CD8-positive, alpha-beta T cell (primary cell): ENCODE measurements at regions of chr9 and their contacts with region 1.

Region 1: DNA sequence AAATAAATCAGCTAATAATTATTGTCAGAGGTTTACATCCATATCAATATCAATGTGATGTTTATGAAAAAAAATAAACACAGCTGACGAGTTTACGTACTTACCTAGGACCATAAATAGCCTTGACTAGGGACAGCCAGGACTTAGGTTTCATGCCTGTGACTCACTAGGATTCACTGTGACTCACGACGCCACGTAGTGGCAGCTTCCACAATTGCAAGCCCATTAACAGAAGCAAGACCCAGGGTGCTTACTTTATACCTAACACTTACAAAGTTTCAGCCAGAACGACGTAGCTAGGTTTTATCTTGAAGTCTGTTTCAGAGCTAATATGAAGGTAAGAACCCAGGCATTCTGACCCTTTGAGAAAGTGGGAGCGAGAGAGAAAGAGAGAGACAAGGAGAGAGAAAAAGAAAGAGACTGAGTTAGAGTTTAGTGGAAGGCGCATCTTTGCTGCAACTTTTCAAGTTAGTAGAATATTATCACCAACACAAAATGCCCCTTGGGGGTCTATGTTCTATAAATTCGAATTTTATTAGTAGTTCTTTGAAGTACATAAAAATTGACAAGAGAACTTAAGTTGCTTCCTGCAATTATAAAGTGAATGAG is 191.2 kb downstream of the GNA14 start:
- DNase-seq: peak; percentile 63 to 81 (median 74)
- ATAC-seq: peak; percentile 85
- H3K4me3 ChIP-seq: no peak overlapping the region
- H3K4me3 Mint-ChIP-seq: no peak overlapping the region
- H3K27ac ChIP-seq: no peak overlapping the region
- H3K27ac Mint-ChIP-seq: no peak overlapping the region
- H3K4me1 ChIP-seq: no peaks in the 10 kb centered on the region
- H3K4me1 Mint-ChIP-seq: peaks cover 15% of the 10 kb centered on the region
- H3K27me3 ChIP-seq: no peaks in the 10 kb centered on the region
- H3K27me3 Mint-ChIP-seq: no peaks in the 10 kb centered on the region
- CTCF ChIP-seq: peak; percentile 74

Region 2: DNA sequence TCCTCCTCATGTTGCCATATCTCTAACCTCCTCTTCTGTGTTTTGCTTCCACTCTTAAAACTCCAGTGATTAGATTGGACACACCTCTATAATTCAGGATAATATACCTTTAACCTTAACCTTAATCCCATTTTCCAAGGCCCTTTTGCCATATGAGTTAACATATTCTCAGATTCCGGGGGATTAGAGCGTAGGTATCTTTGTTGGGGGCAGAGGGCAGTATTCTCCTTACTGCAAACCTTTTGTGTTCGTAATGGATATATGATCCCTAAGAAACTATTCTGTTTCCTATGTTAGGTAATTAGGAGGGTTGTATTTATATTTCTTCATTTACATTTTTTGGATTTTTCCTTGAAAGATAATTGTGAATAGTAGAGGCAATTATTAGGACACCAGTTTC is 180.1 kb before region 1 on chr9:
- CTCF ChIA-PET with region 1: no interaction called
- POLR2A ChIA-PET with region 1: no interaction called
- intact Hi-C with region 1: no loop called
- DNase-seq: no peak
- ATAC-seq: no peak
- H3K4me3 ChIP-seq: no peak overlapping the region
- H3K4me3 Mint-ChIP-seq: no peak overlapping the region
- H3K27ac ChIP-seq: no peak overlapping the region
- H3K27ac Mint-ChIP-seq: no peak overlapping the region
- H3K4me1 ChIP-seq: no peaks in the 10 kb centered on the region
- H3K4me1 Mint-ChIP-seq: no peaks in the 10 kb centered on the region
- H3K27me3 ChIP-seq: no peaks in the 10 kb centered on the region
- H3K27me3 Mint-ChIP-seq: no peaks in the 10 kb centered on the region
- CTCF ChIP-seq: no peak

Region 3: GRCh38 chr9:77433675-77434445 is 23.1 kb before region 1 on chr9:
- CTCF ChIA-PET with region 1: interaction called, 98 read pairs
- POLR2A ChIA-PET with region 1: no interaction called
- intact Hi-C with region 1: no loop called
- DNase-seq: peak in 7 of 9 experiments; percentile 9 to 59 (median 46)
- ATAC-seq: peak; percentile 70
- H3K4me3 ChIP-seq: no peak overlapping the region
- H3K4me3 Mint-ChIP-seq: no peak overlapping the region
- H3K27ac ChIP-seq: no peak overlapping the region
- H3K27ac Mint-ChIP-seq: no peak overlapping the region
- H3K4me1 ChIP-seq: no peaks in the 10 kb centered on the region
- H3K4me1 Mint-ChIP-seq: peaks cover 2% of the 10 kb centered on the region
- H3K27me3 ChIP-seq: no peaks in the 10 kb centered on the region
- H3K27me3 Mint-ChIP-seq: peaks cover 8% of the 10 kb centered on the region
- CTCF ChIP-seq: peak; percentile 88

Region 4: DNA sequence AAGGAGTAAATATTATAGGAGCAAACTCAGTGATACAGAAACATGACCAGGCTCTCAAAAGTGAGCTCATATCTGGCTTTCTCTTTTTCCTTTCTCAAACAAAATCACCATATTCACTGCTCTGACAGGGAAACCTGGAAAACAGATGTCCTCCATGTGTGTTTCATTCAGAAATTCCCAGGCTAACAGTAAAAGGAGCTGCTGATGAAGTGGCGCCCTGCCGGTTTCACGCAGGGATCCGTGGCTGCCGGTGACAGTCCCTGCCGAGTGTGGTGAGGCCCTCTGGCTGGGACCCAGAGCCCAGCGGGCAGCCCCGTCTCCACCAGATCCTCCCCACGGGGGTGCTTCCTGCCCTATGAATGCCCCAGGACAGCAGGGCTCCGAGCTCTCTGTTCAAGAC is 16.9 kb before region 1 on chr9:
- CTCF ChIA-PET with region 1: interaction called, 98 read pairs
- POLR2A ChIA-PET with region 1: no interaction called
- intact Hi-C with region 1: no loop called
- DNase-seq: no peak
- ATAC-seq: no peak
- H3K4me3 ChIP-seq: no peak overlapping the region
- H3K4me3 Mint-ChIP-seq: no peak overlapping the region
- H3K27ac ChIP-seq: no peak overlapping the region
- H3K27ac Mint-ChIP-seq: no peak overlapping the region
- H3K4me1 ChIP-seq: no peaks in the 10 kb centered on the region
- H3K4me1 Mint-ChIP-seq: no peaks in the 10 kb centered on the region
- H3K27me3 ChIP-seq: no peaks in the 10 kb centered on the region
- H3K27me3 Mint-ChIP-seq: peaks cover 4% of the 10 kb centered on the region
- CTCF ChIP-seq: no peak

Region 5: GRCh38 chr9:77469515-77470231 is 12.7 kb after region 1 on chr9:
- CTCF ChIA-PET with region 1: interaction called, 40 read pairs
- POLR2A ChIA-PET with region 1: no interaction called
- intact Hi-C with region 1: loop called in 1 of 2 experiments (anchors 2 kb)
- DNase-seq: no peak
- ATAC-seq: no peak
- H3K4me3 ChIP-seq: no peak overlapping the region
- H3K4me3 Mint-ChIP-seq: no peak overlapping the region
- H3K27ac ChIP-seq: no peak overlapping the region
- H3K27ac Mint-ChIP-seq: no peak overlapping the region
- H3K4me1 ChIP-seq: no peaks in the 10 kb centered on the region
- H3K4me1 Mint-ChIP-seq: no peaks in the 10 kb centered on the region
- H3K27me3 ChIP-seq: no peaks in the 10 kb centered on the region
- H3K27me3 Mint-ChIP-seq: no peaks in the 10 kb centered on the region
- CTCF ChIP-seq: no peak

Region 6: GRCh38 chr9:77475641-77476473 is 18.9 kb after region 1 on chr9:
- CTCF ChIA-PET with region 1: interaction called, 16 read pairs
- POLR2A ChIA-PET with region 1: no interaction called
- intact Hi-C with region 1: loop called (anchors 2 kb)
- DNase-seq: peak in 6 of 9 experiments; percentile 14 to 61 (median 44)
- ATAC-seq: peak; percentile 99
- H3K4me3 ChIP-seq: peak overlapping the region in 1 of 2 experiments; percentile 7
- H3K4me3 Mint-ChIP-seq: peak overlapping the region; percentile 51
- H3K27ac ChIP-seq: peak overlapping the region; percentile 33 to 73
- H3K27ac Mint-ChIP-seq: peak overlapping the region; percentile 92
- H3K4me1 ChIP-seq: peaks cover 17% of the 10 kb centered on the region
- H3K4me1 Mint-ChIP-seq: peaks cover 24% of the 10 kb centered on the region
- H3K27me3 ChIP-seq: no peaks in the 10 kb centered on the region
- H3K27me3 Mint-ChIP-seq: no peaks in the 10 kb centered on the region
- CTCF ChIP-seq: no peak

Region 7: GRCh38 chr9:77488439-77489126 is 31.6 kb after region 1 on chr9:
- CTCF ChIA-PET with region 1: interaction called, 41 read pairs
- POLR2A ChIA-PET with region 1: no interaction called
- intact Hi-C with region 1: no loop called
- DNase-seq: no peak
- ATAC-seq: no peak
- H3K4me3 ChIP-seq: no peak overlapping the region
- H3K4me3 Mint-ChIP-seq: peak overlapping the region; percentile 80
- H3K27ac ChIP-seq: no peak overlapping the region
- H3K27ac Mint-ChIP-seq: no peak overlapping the region
- H3K4me1 ChIP-seq: no peaks in the 10 kb centered on the region
- H3K4me1 Mint-ChIP-seq: peaks cover 12% of the 10 kb centered on the region
- H3K27me3 ChIP-seq: no peaks in the 10 kb centered on the region
- H3K27me3 Mint-ChIP-seq: peaks cover 6% of the 10 kb centered on the region
- CTCF ChIP-seq: no peak

Region 8: GRCh38 chr9:78630966-78631365 is 1174.0 kb after region 1 on chr9:
- CTCF ChIA-PET with region 1: no interaction called
- POLR2A ChIA-PET with region 1: no interaction called
- intact Hi-C with region 1: no loop called
- DNase-seq: no peak
- ATAC-seq: no peak
- H3K4me3 ChIP-seq: no peak overlapping the region
- H3K4me3 Mint-ChIP-seq: no peak overlapping the region
- H3K27ac ChIP-seq: no peak overlapping the region
- H3K27ac Mint-ChIP-seq: no peak overlapping the region
- H3K4me1 ChIP-seq: no peaks in the 10 kb centered on the region
- H3K4me1 Mint-ChIP-seq: no peaks in the 10 kb centered on the region
- H3K27me3 ChIP-seq: no peaks in the 10 kb centered on the region
- H3K27me3 Mint-ChIP-seq: peaks cover 3% of the 10 kb centered on the region
- CTCF ChIP-seq: no peak